ENCODE measurements at regions of chr10 and their contacts with region 1.

Region 1: GRCh38 chr10:9081253-9081652 is 1026.8 kb downstream of the GATA3 start:
- DNase-seq: no peak
- H3K4me3 Mint-ChIP-seq: no peak overlapping the region
- H3K27ac Mint-ChIP-seq: no peak overlapping the region
- H3K4me1 Mint-ChIP-seq: peaks cover 4% of the 10 kb centered on the region
- H3K27me3 Mint-ChIP-seq: peaks cover 7% of the 10 kb centered on the region

Region 2: DNA sequence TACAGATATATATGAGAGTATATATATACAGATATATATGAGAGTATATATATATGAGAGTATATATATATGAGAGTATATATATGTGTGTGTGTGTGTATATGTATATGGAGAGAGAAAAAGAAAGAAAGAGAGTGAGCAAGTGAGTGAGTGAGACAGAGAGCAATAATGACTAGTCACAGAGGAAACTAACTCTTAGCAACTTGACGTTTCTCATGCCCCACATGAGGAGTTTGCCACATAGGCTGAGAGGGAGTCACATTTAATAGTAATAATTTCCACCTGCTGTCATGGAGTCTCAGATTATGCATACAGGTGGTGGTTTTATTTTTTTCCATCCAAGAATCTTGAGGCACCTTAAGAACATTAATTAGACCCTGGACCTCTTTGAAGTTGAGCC is 826.9 kb before region 1 on chr10:
- intact Hi-C with region 1: loop called (anchors 10 kb)
- DNase-seq: no peak
- H3K4me3 Mint-ChIP-seq: peak overlapping the region; percentile 7
- H3K27ac Mint-ChIP-seq: peak overlapping the region; percentile 77
- H3K4me1 Mint-ChIP-seq: peaks cover 34% of the 10 kb centered on the region
- H3K27me3 Mint-ChIP-seq: no peaks in the 10 kb centered on the region